Activated CD4-positive, alpha-beta T cell treated with anti-CD3 and anti-CD28 coated beads for 36 hours (primary cell): ENCODE measurements at regions of chr20 and their contacts with region 1.

Region 1: GRCh38 chr20:57309544-57310115 is 20.0 kb upstream of the SPO11 start:
- DNase-seq: no peak
- ATAC-seq: no peak
- H3K4me3 Mint-ChIP-seq: no peak overlapping the region
- H3K27ac Mint-ChIP-seq: no peak overlapping the region
- H3K4me1 Mint-ChIP-seq: no peaks in the 10 kb centered on the region
- H3K27me3 Mint-ChIP-seq: peaks cover 2% of the 10 kb centered on the region

Region 2: GRCh38 chr20:57231951-57232428 is 77.6 kb before region 1 on chr20:
- CTCF ChIA-PET with region 1: no interaction called
- POLR2A ChIA-PET with region 1: no interaction called
- intact Hi-C with region 1: loop called in 1 of 2 experiments (anchors 5 kb)
- DNase-seq: no peak
- ATAC-seq: no peak
- H3K4me3 Mint-ChIP-seq: no peak overlapping the region
- H3K27ac Mint-ChIP-seq: no peak overlapping the region
- H3K4me1 Mint-ChIP-seq: no peaks in the 10 kb centered on the region
- H3K27me3 Mint-ChIP-seq: peaks cover 22% of the 10 kb centered on the region